ENCODE measurements at regions of chr17 and their contacts with region 1.

Region 1: DNA sequence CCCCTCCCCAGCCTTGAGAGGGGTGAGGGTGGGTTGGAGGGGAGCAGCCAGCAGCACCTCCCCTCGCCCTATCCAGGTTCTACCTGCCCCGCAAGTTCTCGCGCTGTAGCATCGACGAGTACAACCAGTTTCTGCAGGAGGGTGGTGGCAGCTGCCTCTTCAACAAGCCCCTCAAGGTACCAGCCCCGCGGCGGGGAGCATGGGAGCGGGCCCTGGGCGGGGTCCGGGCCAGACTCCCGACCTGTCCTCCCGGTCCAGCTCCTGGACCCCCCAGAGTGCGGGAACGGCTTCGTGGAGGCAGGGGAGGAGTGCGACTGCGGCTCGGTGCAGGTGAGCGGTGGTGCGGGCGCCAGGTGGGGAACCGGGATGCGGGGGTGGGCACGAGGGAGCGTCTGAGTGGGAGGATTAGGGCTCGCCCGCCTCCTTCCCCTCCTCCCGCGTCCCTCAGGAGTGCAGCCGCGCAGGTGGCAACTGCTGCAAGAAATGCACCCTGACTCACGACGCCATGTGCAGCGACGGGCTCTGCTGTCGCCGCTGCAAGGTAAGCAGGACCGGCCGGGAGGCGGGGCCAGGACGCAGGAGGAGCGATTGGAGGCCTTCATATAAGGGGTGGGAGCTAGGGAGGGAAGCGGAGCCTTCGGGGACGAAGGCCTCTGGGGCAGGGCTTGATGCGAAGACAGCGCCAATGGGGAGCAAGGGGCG is 16.5 kb downstream of the ADAM11 start:
- DNase-seq: peak; percentile 99
- CTCF ChIP-seq: no peak

Region 2: GRCh38 chr17:44864866-44865660 is 89.8 kb after region 1 on chr17:
- in situ Hi-C with region 1: loop called (anchors 10 kb)
- DNase-seq: peak; percentile 78
- CTCF ChIP-seq: peak; percentile 68

Measured in GM13976 (cell line).